ENCODE measurements at regions of chr15 and their contacts with region 1.

Region 1: DNA sequence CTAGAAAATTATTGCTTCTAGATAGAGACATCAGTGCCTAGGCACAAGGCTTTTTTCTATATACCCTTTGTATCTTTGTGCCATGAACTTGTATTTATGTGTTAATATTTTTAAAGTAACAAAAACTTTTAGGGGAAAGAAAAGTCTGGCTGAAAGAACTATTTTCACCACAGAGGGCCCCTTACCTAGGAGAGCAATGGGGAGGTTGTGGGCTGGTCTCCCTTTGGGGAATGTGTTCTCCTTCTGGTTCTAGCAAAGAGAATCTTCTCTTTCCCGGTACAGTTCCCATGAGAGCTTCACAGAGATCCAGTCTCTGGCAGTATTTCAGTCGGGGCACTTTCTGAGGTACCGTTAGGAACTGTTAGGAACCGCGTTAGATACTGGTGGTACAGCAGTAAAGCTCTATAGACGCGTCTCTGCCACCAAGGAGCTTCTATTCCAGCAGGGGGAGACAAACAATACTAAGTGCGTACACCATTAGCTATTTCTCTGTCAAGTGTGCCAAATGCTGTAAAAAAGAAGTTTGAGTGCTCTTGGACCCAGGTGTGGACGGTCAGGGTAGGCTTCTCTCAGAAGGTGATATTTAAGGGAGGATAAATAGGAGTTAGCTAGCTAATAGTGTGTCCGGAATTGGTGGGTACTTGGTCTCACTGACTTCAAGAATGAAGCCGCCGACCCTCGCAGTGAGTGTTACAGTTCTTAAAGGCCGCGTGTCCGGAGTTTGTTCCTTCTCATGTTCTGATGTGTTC is 4.6 kb upstream of the EPB42 start:
- DNase-seq: peak; percentile 77 to 88 (median 81)
- H3K4me3 ChIP-seq: no peak overlapping the region
- H3K27ac ChIP-seq: no peak overlapping the region
- H3K4me1 ChIP-seq: peaks cover 0 to 17% (median 4%) of the 10 kb centered on the region in 4 experiments
- H3K27me3 ChIP-seq: peaks cover 0 to 2% (median 0%) of the 10 kb centered on the region in 5 experiments

Region 2: DNA sequence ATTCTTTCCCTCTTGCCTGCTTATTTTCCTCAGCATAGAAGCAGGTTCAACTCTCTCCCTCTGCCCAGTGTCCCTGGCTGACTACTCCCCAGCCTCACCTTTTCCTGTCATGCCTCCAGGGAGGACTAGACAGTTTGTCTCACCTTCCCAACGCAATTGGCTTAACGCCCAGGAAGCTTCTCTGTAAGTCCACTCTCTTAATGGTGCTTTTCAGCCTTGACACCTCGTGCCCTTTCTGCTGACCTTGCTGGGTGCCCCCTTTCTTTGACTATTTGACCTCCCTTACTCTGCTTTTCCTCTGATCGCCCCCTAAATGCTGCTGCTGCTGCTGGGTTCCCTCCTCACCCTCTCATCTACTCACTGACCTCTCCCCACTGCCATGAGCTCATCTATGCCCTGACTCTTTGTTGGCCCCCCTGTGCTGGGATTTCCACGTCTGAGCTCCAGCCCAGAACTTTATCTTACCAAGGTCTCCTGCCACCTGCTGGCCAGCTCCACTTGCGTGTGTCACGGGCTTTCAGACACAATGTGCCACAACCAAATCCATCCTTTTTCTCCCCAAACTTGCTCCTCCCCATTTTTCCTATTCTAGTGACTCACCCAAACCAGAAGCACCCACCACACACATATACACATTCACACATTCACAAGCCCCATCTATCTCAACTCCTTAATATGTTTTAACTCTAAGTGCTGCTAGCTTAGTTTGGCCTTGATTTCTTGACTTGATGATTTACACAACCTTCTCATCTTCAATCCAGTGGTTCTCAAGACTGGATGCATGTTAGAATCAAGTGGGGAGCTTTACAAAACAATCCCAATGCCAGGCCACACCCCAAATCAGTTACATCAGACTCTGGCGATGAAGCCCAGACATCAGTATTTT is 21.1 kb before region 1 on chr15:
- CTCF ChIA-PET with region 1: interaction called, 29 read pairs
- POLR2A ChIA-PET with region 1: interaction called, 4 read pairs
- DNase-seq: peak; percentile 63 to 77 (median 77)
- H3K4me3 ChIP-seq: no peak overlapping the region
- H3K27ac ChIP-seq: no peak overlapping the region
- H3K4me1 ChIP-seq: no peaks in the 10 kb centered on the region
- H3K27me3 ChIP-seq: peaks cover 0 to 18% (median 10%) of the 10 kb centered on the region in 5 experiments

Region 3: DNA sequence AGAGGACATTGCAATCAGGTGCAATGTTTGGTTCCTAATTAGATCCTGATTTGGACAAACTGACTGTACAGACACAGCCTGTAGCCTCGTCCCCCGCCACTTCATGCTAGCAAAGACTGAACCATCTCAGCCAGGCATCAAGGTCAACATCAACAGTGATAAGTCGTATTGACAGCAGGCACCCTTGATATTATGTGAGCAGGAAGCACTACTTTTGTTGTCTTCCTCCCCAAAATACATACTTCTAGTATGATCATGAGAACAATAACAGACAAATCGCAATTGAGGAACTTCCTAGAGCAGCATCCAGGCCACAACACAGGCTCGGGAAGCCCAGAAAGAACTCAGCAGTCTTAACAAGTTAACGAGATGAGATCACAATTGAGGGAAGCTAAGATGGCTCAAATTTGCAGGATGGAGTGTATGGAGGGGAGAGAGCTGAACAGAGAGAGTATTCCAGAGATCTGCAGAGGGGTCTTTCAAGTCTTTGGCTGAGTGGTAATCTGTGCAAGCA is 20.9 kb after region 1 on chr15:
- CTCF ChIA-PET with region 1: interaction called, 30 read pairs
- POLR2A ChIA-PET with region 1: interaction called, 3 read pairs
- DNase-seq: peak in 1 of 3 donors; percentile 25
- H3K4me3 ChIP-seq: no peak overlapping the region
- H3K27ac ChIP-seq: no peak overlapping the region
- H3K4me1 ChIP-seq: peaks cover 0 to 48% (median 16%) of the 10 kb centered on the region in 4 experiments
- H3K27me3 ChIP-seq: peaks cover 0 to 19% (median 11%) of the 10 kb centered on the region in 5 experiments

Region 4: GRCh38 chr15:43268111-43269105 is 43.0 kb after region 1 on chr15:
- CTCF ChIA-PET with region 1: interaction called, 201 read pairs
- POLR2A ChIA-PET with region 1: interaction called, 5 read pairs
- DNase-seq: peak; percentile 49 to 62 (median 60)
- H3K4me3 ChIP-seq: no peak overlapping the region
- H3K27ac ChIP-seq: no peak overlapping the region
- H3K4me1 ChIP-seq: peaks cover 8 to 36% (median 21%) of the 10 kb centered on the region in 4 experiments
- H3K27me3 ChIP-seq: peaks cover 0 to 2% (median 0%) of the 10 kb centered on the region in 5 experiments

Region 5: DNA sequence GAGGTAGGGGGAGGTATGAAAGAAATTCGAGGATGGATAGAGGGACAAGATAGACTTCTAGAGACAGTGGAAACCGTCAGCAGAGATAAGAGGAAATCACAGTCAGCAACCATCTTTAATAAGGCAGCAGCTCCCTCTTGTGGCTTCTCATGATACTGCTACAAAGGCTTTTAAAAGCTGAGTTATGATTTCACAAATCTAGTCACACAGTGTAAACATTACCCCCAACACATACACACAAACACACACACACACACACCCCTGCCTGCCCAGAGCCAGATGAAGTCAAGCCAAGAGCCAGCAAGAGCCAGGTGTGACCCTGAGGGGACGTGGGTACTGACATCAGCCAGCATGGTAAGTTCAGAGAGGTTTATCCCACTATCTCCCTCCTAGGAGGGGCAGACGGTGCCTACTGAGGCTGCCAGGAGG is 60.2 kb after region 1 on chr15:
- CTCF ChIA-PET with region 1: interaction called, 127 read pairs
- POLR2A ChIA-PET with region 1: interaction called, 8 read pairs
- DNase-seq: peak; percentile 59 to 77 (median 68)
- H3K4me3 ChIP-seq: no peak overlapping the region
- H3K27ac ChIP-seq: no peak overlapping the region
- H3K4me1 ChIP-seq: peaks cover 10 to 21% (median 19%) of the 10 kb centered on the region in 4 experiments
- H3K27me3 ChIP-seq: peaks cover 0 to 9% (median 0%) of the 10 kb centered on the region in 5 experiments

Region 6: DNA sequence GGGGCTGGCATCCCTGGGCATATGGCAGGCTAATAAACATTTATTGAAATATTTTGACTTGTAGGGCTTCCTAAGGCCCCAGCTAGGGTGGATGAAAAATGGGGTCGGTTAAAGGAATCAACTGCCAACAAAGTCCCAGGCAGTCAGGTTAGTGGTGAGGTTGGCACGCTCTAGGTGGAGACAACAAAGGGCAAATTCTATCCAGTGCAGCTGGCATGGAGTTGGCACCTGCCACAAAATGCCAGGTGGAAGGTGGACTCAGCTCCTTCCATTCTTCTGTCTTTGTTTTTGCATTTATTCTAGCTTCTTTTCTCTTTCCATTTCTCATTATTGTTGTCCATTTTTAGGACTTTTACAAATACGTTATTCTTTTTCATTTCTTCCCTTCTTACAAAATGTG is 74.0 kb after region 1 on chr15:
- CTCF ChIA-PET with region 1: no interaction called
- POLR2A ChIA-PET with region 1: no interaction called
- DNase-seq: no peak
- H3K4me3 ChIP-seq: no peak overlapping the region
- H3K27ac ChIP-seq: no peak overlapping the region
- H3K4me1 ChIP-seq: no peaks in the 10 kb centered on the region
- H3K27me3 ChIP-seq: peaks cover 0 to 5% (median under 1%) of the 10 kb centered on the region in 5 experiments

Measured in common myeloid progenitor, CD34-positive (primary cell).